ENCODE measurements at regions of chr2 and their contacts with region 1.

Region 1: DNA sequence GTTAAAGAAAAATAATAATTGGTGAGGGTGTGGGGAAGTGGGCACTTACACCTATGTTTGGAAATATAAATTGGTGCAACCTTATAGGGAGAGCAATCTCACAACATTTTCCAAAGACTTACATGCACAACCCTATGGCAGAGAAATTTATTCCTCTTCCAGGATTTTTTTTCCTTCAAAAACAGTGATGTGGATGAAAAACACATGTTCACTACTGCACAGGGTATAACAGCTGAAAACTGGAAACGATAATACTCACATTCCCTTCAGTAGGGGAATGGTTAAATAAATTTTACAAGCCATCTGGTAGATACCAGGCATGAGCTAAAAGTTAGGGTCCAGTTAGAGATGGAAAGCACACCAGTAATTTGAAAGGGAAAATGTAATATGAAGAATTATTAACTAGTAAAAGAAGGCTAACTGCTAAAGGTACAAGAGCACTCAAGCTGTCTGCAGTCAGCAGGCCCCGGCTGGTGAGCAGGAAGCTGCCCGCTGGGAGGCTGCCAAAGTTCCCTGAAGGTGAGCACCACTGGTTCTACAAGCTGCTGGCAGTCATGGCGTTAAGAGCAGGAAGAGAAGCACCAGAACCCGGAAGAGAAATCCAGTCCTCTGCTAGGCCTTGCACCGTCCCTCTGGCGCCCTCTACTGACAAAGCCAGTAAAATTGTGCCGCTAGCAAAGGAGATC is 28.4 kb upstream of the CASP8 start:
- DNase-seq: peak; percentile 95
- H3K4me3 Mint-ChIP-seq: peak overlapping the region; percentile 98
- H3K27ac Mint-ChIP-seq: peak overlapping the region; percentile 97
- H3K4me1 Mint-ChIP-seq: peaks cover 65% of the 10 kb centered on the region
- H3K27me3 Mint-ChIP-seq: no peaks in the 10 kb centered on the region

Region 2: DNA sequence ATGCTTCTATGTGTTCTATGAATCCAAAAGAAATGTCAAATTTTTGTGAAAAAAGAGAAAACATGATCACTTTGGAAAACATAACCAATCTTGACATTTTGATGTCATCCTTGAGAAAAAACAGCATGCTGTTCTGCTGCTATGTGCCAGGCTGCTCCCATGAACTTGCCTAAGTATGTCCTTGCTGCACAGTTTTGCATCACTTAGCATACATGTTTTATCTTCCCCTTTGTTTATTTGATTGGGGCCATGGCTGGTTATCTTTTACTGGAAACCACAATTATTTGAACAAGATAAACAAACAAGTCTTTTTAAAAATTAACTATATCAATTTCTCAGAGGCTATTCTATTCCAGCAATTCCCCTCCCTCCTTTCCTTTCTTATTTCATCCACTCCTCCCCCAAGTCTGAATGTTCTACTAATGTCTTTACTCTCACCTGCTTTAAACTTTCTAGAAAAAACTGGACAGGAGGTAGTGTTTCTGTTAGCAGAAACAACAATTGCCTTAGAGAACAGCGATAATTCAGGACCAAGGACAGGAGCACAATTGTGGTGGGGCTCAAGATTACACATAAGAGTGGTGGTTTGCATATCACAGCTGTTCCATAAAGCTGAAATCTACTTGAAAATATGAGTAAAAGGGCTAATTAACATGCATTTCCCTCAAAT is 639.4 kb before region 1 on chr2:
- CTCF ChIA-PET with region 1: no interaction called
- DNase-seq: no peak
- H3K4me3 Mint-ChIP-seq: no peak overlapping the region
- H3K27ac Mint-ChIP-seq: no peak overlapping the region
- H3K4me1 Mint-ChIP-seq: no peaks in the 10 kb centered on the region
- H3K27me3 Mint-ChIP-seq: peaks cover 42% of the 10 kb centered on the region

Region 3: DNA sequence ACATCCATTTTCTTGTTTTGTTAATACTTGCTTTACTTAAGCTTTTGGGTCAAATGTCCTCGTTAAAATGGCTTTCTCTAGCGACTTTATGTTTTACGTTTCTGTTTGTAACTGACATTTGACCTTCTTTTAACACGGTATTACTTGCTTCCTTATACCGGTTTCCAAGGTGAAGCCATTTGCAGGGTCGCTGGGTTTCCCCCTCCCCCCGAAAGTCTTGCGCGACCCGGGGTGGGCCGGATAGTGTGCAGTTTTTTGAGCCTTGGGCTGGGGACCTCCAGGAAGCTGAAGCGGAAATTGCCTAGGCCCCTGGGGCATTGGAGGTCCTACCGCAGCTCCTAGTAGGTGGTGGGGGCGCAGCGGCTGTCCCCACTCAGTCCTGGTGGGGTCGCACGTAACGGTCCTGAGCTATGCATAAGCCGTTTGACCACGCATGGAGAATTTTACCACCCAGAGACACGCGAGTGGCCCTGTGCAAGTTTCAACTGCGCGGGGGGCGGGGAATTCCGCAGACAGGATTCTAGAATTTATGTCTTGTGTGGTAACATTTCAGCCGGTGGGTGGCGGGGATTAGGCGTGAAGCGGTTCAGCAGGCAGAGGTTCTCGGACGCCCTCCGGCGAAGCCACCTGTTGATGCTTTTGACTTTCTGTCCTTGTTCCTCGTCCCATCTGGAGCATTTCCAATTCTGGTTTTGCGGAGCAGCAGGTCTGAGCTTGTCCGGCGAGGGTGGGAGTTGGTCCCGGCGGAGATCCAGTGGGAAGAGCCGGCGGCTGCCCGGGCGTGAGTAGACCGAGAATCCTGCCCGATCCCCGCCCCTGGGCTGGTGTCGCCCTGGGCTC is 113.6 kb before region 1 on chr2:
- CTCF ChIA-PET with region 1: interaction called, 16 read pairs
- DNase-seq: peak; percentile 92
- H3K4me3 Mint-ChIP-seq: peak overlapping the region; percentile 84
- H3K27ac Mint-ChIP-seq: peak overlapping the region; percentile 100
- H3K4me1 Mint-ChIP-seq: peaks cover 64% of the 10 kb centered on the region
- H3K27me3 Mint-ChIP-seq: peaks cover 7% of the 10 kb centered on the region

Region 4: GRCh38 chr2:201176081-201176481 is 55.8 kb before region 1 on chr2:
- CTCF ChIA-PET with region 1: interaction called, 202 read pairs
- DNase-seq: no peak
- H3K4me3 Mint-ChIP-seq: no peak overlapping the region
- H3K27ac Mint-ChIP-seq: no peak overlapping the region
- H3K4me1 Mint-ChIP-seq: peaks cover 18% of the 10 kb centered on the region
- H3K27me3 Mint-ChIP-seq: no peaks in the 10 kb centered on the region

Region 5: GRCh38 chr2:201194097-201194496 is 37.8 kb before region 1 on chr2:
- CTCF ChIA-PET with region 1: interaction called, 47 read pairs
- DNase-seq: no peak
- H3K4me3 Mint-ChIP-seq: peak overlapping the region; percentile 59
- H3K27ac Mint-ChIP-seq: peak overlapping the region; percentile 91
- H3K4me1 Mint-ChIP-seq: peaks cover 81% of the 10 kb centered on the region
- H3K27me3 Mint-ChIP-seq: no peaks in the 10 kb centered on the region

Region 6: DNA sequence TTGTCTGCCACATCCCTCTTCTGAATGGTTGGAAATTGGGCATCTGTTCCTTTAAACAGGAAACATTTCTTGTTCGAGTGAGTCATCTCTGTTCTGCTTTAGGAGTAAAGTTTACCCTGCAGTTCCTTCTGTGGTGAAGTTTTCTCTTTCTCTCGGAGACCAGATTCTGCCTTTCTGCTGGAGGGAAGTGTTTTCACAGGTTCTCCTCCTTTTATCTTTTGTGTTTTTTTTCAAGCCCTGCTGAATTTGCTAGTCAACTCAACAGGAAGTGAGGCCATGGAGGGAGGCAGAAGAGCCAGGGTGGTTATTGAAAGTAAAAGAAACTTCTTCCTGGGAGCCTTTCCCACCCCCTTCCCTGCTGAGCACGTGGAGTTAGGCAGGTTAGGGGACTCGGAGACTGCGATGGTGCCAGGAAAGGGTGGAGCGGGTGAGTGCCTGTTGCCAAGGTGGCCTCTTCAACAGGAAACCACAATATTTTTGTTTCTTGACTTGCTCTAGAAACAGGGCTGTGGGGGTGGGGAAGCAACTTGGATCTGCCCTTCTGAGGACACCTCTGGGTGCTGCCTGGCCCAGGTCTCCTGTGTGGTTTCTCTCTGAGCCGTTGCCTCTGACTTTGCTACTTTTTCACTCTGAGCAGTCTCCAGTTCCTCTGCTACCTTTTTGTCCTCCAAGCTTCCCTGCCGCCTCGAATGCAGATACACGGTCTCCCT is 26.2 kb after region 1 on chr2:
- CTCF ChIA-PET with region 1: interaction called, 57 read pairs
- DNase-seq: peak; percentile 99
- H3K4me3 Mint-ChIP-seq: peak overlapping the region; percentile 77
- H3K27ac Mint-ChIP-seq: peak overlapping the region; percentile 95
- H3K4me1 Mint-ChIP-seq: peaks cover 78% of the 10 kb centered on the region
- H3K27me3 Mint-ChIP-seq: no peaks in the 10 kb centered on the region

Region 7: GRCh38 chr2:201420442-201421113 is 188.7 kb after region 1 on chr2:
- CTCF ChIA-PET with region 1: no interaction called
- DNase-seq: no peak
- H3K4me3 Mint-ChIP-seq: no peak overlapping the region
- H3K27ac Mint-ChIP-seq: no peak overlapping the region
- H3K4me1 Mint-ChIP-seq: peaks cover 44% of the 10 kb centered on the region
- H3K27me3 Mint-ChIP-seq: no peaks in the 10 kb centered on the region

Measured in activated naive CD4-positive, alpha-beta T cell treated with anti-CD3 and anti-CD28 coated beads, Interleukin-2, amount 10 ng/mL, durations not matched to agents 7 days and 5 days (primary cell).